ENCODE measurements at regions of chr20 and their contacts with region 1.

Region 1: DNA sequence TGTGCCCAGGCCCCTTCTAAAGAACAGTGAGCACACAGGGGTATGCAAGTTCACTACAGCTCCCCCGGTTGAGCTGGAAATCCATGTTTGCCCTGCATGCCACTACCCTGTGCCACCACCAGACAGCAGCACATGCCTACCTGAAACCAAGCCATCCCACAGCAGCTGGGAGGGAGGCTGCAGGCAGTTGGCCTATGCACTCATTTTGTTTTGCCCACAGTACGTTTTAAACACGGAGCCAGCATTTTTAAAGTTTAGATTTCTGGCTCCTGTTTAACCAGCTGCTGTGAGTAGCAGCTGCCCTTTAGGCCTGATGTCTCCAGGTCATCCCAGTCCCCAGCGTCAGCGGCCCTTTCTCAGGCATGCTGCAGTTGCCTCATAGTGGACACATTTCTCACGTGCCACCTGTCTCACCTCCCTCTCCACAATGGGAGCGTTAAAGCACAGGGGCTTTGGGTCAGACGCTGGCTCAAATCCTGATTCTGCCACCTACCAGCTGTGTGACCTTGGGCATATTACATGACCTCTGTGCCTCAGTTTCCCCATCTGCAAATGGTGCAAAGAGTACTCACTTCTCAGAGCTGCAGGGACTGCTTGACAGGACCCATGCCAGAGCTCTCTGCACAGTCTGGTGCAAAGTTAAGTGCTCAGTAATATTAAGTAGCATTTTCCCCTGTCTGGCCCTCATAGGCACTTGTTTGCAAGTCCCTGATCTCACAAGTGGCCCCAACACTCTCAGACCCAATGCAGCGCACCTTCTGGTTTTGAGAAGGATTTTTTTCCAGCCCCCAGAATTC is 8.1 kb upstream of the UBE2V1 start:
- H3K4me3 ChIP-seq: no peak overlapping the region
- H3K27ac ChIP-seq: no peak overlapping the region
- H3K4me1 ChIP-seq: no peaks in the 10 kb centered on the region
- CTCF ChIP-seq: peak; percentile 84

Region 2: GRCh38 chr20:50085452-50086365 is 35.4 kb before region 1 on chr20:
- CTCF ChIA-PET with region 1: interaction called, 10 read pairs
- POLR2A ChIA-PET with region 1: no interaction called
- H3K4me3 ChIP-seq: no peak overlapping the region
- H3K27ac ChIP-seq: no peak overlapping the region
- H3K4me1 ChIP-seq: peaks cover 8% of the 10 kb centered on the region
- CTCF ChIP-seq: peak; percentile 79

Region 3: DNA sequence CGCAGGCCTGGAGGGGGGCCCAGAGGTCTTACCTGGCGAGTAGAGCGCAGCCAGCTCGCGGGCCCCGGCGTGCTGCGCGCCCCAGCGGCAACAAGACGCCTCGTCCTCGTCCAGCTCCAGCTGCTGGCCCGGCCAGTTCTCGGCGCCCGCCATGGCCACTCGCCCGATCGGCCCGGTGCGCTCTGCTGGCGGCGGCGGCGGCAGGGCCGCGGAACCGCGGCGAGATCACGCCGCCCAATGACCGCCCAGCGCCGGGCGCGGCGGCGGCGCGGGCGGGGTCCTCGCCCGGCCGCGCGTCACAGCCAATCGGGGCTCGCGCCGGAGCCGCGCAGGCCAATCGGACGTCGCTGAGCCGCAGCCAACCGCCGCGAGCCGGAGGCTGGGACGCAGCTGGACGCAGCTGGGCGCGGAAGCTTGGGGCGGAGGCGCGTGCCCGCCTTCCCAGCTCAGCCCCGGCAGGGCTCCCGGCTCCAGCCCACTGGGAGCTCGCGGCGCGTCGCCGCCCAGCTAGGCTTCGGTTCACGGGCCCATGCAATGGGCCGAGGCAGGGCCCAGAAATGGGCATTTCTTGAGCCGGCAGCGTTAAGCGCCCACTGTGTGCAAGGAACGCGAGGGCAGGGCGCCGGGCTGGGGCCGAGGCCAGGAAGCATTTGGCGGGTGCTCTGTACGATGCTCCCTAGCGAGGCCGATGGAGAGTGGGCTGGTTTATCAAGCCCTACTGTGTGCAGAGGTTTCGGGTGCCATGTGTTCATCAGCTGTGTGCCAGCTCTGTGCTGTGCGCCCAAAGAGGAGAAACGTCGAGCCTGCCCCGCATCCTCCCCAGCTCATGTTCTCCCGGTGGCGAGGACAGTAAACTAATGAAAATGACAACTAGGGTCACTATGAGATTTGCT is 32.6 kb after region 1 on chr20 and contains the start of gene PEDS1:
- CTCF ChIA-PET with region 1: interaction called, 11 read pairs
- POLR2A ChIA-PET with region 1: interaction called, 26 read pairs
- H3K4me3 ChIP-seq: peak within 1 kb of the TSS; percentile 83
- H3K27ac ChIP-seq: peak within 1 kb of the TSS; percentile 83
- H3K4me1 ChIP-seq: peaks cover 4% of the 10 kb centered on the region; the same call in 1 of the 2 replicates
- CTCF ChIP-seq: peak; percentile 45

Region 4: DNA sequence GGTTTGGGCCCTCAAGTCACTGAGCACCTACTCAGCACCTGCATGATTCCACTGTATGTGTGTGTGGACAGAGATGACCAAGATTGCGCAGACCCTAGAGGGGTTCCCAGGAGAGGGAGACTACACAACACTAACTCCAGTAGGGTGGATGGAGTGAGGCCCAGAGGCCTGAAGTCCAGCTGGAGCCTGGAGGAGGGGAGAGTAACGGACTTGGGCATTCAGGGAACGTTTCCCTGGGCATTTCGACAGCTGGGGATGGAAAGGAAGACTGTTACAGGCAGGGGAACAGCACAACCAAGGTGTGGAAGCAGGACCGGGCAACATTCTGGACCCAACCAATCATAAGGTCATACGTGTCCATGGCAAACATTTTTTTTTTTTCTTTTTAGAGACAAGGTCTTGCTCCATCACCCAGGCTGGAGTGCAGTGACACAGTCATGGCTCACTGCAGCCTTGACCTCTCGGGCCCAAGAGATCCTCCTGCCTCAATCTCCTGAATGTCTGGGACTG is 58.5 kb after region 1 on chr20:
- CTCF ChIA-PET with region 1: interaction called, 94 read pairs
- POLR2A ChIA-PET with region 1: interaction called, 10 read pairs
- H3K4me3 ChIP-seq: no peak overlapping the region
- H3K27ac ChIP-seq: no peak overlapping the region
- H3K4me1 ChIP-seq: no peaks in the 10 kb centered on the region
- CTCF ChIP-seq: no peak